Left colon (tissue), 2 donors: ENCODE measurements at regions of chr9 and their contacts with region 1.

Region 1: DNA sequence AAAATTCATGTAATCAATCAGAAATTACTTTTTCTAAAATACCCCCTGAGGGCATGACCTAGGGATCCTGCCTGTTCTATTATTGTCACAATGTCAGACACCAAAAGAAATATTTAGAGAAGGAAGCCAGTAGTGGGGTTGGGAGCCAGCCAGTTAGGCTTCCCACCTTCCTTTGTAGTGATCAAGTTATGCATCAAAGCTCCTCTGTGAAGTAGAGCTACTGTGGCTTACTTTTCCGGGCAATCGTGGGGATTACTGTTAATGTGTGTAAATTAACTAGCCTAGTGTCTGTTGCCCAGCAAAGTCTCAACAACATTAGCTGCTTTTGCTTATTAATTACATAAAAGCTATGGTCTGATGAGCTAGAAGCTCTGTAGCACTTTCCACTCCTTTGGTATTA is 109.0 kb upstream of the PCAT7 start:
- DNase-seq: no peak
- ATAC-seq: no peak

Region 2: GRCh38 chr9:94511134-94511903 is 65.5 kb after region 1 on chr9:
- intact Hi-C with region 1: loop called in 1 of 2 experiments (anchors 10 kb)
- DNase-seq: no peak
- ATAC-seq: no peak